B cell (primary cell): ENCODE measurements at regions of chr15 and their contacts with region 1.

Region 1: GRCh38 chr15:80776420-80777045 is 2.6 kb upstream of the CEMIP start:
- DNase-seq: peak; percentile 66
- ATAC-seq: peak; percentile 57
- H3K4me3 ChIP-seq: no peak overlapping the region
- H3K4me3 Mint-ChIP-seq: no peak overlapping the region
- H3K27ac ChIP-seq: no peak overlapping the region
- H3K27ac Mint-ChIP-seq: no peak overlapping the region
- H3K4me1 ChIP-seq: peaks cover 14% of the 10 kb centered on the region in 2 donors
- H3K4me1 Mint-ChIP-seq: peaks cover 12% of the 10 kb centered on the region
- H3K27me3 ChIP-seq: peaks cover 0 to 40% (median 16%) of the 10 kb centered on the region in 4 experiments
- H3K27me3 Mint-ChIP-seq: peaks cover 15% of the 10 kb centered on the region
- CTCF ChIP-seq: peak; percentile 79

Region 2: GRCh38 chr15:80455668-80456442 is 320.7 kb before region 1 on chr15:
- CTCF ChIA-PET with region 1: interaction called, 69 read pairs
- POLR2A ChIA-PET with region 1: no interaction called
- intact Hi-C with region 1: no loop called
- DNase-seq: peak; percentile 69
- ATAC-seq: peak; percentile 49
- H3K4me3 ChIP-seq: no peak overlapping the region
- H3K4me3 Mint-ChIP-seq: no peak overlapping the region
- H3K27ac ChIP-seq: no peak overlapping the region
- H3K27ac Mint-ChIP-seq: no peak overlapping the region
- H3K4me1 ChIP-seq: peaks cover 0 to 4% of the 10 kb centered on the region in 2 donors
- H3K4me1 Mint-ChIP-seq: peaks cover 4% of the 10 kb centered on the region
- H3K27me3 ChIP-seq: peaks cover 0 to 8% (median 4%) of the 10 kb centered on the region in 4 experiments
- H3K27me3 Mint-ChIP-seq: peaks cover 11% of the 10 kb centered on the region
- CTCF ChIP-seq: peak; percentile 98

Region 3: GRCh38 chr15:80475572-80475971 is 301.0 kb before region 1 on chr15:
- CTCF ChIA-PET with region 1: no interaction called
- POLR2A ChIA-PET with region 1: no interaction called
- intact Hi-C with region 1: no loop called
- DNase-seq: no peak
- ATAC-seq: no peak
- H3K4me3 ChIP-seq: no peak overlapping the region
- H3K4me3 Mint-ChIP-seq: no peak overlapping the region
- H3K27ac ChIP-seq: no peak overlapping the region
- H3K27ac Mint-ChIP-seq: no peak overlapping the region
- H3K4me1 ChIP-seq: no peaks in the 10 kb centered on the region
- H3K4me1 Mint-ChIP-seq: no peaks in the 10 kb centered on the region
- H3K27me3 ChIP-seq: no peaks in the 10 kb centered on the region
- H3K27me3 Mint-ChIP-seq: peaks cover 20% of the 10 kb centered on the region
- CTCF ChIP-seq: no peak

Region 4: GRCh38 chr15:80567721-80568157 is 208.8 kb before region 1 on chr15:
- CTCF ChIA-PET with region 1: interaction called, 22 read pairs
- POLR2A ChIA-PET with region 1: no interaction called
- intact Hi-C with region 1: loop called (anchors 1 kb)
- DNase-seq: peak; percentile 18
- ATAC-seq: no peak
- H3K4me3 ChIP-seq: no peak overlapping the region
- H3K4me3 Mint-ChIP-seq: no peak overlapping the region
- H3K27ac ChIP-seq: no peak overlapping the region
- H3K27ac Mint-ChIP-seq: no peak overlapping the region
- H3K4me1 ChIP-seq: no peaks in the 10 kb centered on the region
- H3K4me1 Mint-ChIP-seq: no peaks in the 10 kb centered on the region
- H3K27me3 ChIP-seq: peaks cover 0 to 3% (median 0%) of the 10 kb centered on the region in 4 experiments
- H3K27me3 Mint-ChIP-seq: peaks cover 43% of the 10 kb centered on the region
- CTCF ChIP-seq: peak; percentile 15

Region 5: GRCh38 chr15:80766275-80766674 is 10.3 kb before region 1 on chr15:
- CTCF ChIA-PET with region 1: interaction called, 11 read pairs
- POLR2A ChIA-PET with region 1: no interaction called
- intact Hi-C with region 1: no loop called
- DNase-seq: no peak
- ATAC-seq: no peak
- H3K4me3 ChIP-seq: no peak overlapping the region
- H3K4me3 Mint-ChIP-seq: no peak overlapping the region
- H3K27ac ChIP-seq: no peak overlapping the region
- H3K27ac Mint-ChIP-seq: no peak overlapping the region
- H3K4me1 ChIP-seq: no peaks in the 10 kb centered on the region
- H3K4me1 Mint-ChIP-seq: no peaks in the 10 kb centered on the region
- H3K27me3 ChIP-seq: no peaks in the 10 kb centered on the region
- H3K27me3 Mint-ChIP-seq: peaks cover 4% of the 10 kb centered on the region
- CTCF ChIP-seq: no peak

Region 6: GRCh38 chr15:80789296-80789695 is 12.8 kb after region 1 on chr15:
- CTCF ChIA-PET with region 1: interaction called, 15 read pairs
- POLR2A ChIA-PET with region 1: no interaction called
- intact Hi-C with region 1: no loop called
- DNase-seq: no peak
- ATAC-seq: no peak
- H3K4me3 ChIP-seq: no peak overlapping the region
- H3K4me3 Mint-ChIP-seq: no peak overlapping the region
- H3K27ac ChIP-seq: no peak overlapping the region
- H3K27ac Mint-ChIP-seq: no peak overlapping the region
- H3K4me1 ChIP-seq: no peaks in the 10 kb centered on the region
- H3K4me1 Mint-ChIP-seq: no peaks in the 10 kb centered on the region
- H3K27me3 ChIP-seq: peaks cover 0 to 2% (median 0%) of the 10 kb centered on the region in 4 experiments
- H3K27me3 Mint-ChIP-seq: peaks cover 30% of the 10 kb centered on the region
- CTCF ChIP-seq: no peak

Region 7: GRCh38 chr15:80801891-80802680 is 25.6 kb after region 1 on chr15:
- CTCF ChIA-PET with region 1: no interaction called
- POLR2A ChIA-PET with region 1: no interaction called
- intact Hi-C with region 1: no loop called
- DNase-seq: no peak
- ATAC-seq: no peak
- H3K4me3 ChIP-seq: no peak overlapping the region
- H3K4me3 Mint-ChIP-seq: no peak overlapping the region
- H3K27ac ChIP-seq: no peak overlapping the region
- H3K27ac Mint-ChIP-seq: no peak overlapping the region
- H3K4me1 ChIP-seq: no peaks in the 10 kb centered on the region
- H3K4me1 Mint-ChIP-seq: no peaks in the 10 kb centered on the region
- H3K27me3 ChIP-seq: no peaks in the 10 kb centered on the region
- H3K27me3 Mint-ChIP-seq: peaks cover 2% of the 10 kb centered on the region
- CTCF ChIP-seq: no peak

Region 8: DNA sequence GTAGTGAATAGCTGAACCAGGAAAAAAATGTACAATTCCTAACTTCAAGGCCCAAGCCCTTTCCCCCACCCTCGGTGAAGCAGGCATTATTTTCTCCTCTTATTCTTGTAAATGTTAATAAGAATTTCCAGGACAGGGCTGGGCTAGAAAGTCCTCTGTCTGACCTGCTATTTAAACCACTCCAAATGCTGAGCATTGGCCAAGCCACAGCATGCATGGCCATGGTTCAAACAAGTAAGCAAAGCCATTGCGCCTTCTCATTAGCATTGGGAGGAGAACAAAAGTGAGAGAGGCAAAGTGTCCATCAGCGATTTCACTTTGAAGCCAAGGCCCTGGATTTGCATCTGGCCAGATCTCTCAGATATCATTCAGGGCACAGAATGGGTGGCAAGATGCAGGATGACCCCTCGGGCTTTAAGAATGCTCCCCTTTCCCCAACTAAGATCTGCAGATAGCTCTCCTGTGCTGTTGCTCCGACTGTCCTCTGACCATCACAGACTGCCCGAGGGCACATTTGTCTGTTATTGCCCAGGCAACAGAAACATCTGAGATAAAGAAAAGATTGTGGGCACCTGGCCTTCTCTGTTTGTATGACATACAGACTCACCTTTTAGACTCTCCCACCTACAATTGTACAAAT is 49.0 kb after region 1 on chr15:
- CTCF ChIA-PET with region 1: interaction called, 4 read pairs
- POLR2A ChIA-PET with region 1: no interaction called
- intact Hi-C with region 1: loop called (anchors 2 kb)
- DNase-seq: no peak
- ATAC-seq: no peak
- H3K4me3 ChIP-seq: no peak overlapping the region
- H3K4me3 Mint-ChIP-seq: no peak overlapping the region
- H3K27ac ChIP-seq: no peak overlapping the region
- H3K27ac Mint-ChIP-seq: no peak overlapping the region
- H3K4me1 ChIP-seq: peaks cover 19 to 26% of the 10 kb centered on the region in 2 donors
- H3K4me1 Mint-ChIP-seq: peaks cover 30% of the 10 kb centered on the region
- H3K27me3 ChIP-seq: no peaks in the 10 kb centered on the region
- H3K27me3 Mint-ChIP-seq: peaks cover 10% of the 10 kb centered on the region
- CTCF ChIP-seq: no peak

Region 9: DNA sequence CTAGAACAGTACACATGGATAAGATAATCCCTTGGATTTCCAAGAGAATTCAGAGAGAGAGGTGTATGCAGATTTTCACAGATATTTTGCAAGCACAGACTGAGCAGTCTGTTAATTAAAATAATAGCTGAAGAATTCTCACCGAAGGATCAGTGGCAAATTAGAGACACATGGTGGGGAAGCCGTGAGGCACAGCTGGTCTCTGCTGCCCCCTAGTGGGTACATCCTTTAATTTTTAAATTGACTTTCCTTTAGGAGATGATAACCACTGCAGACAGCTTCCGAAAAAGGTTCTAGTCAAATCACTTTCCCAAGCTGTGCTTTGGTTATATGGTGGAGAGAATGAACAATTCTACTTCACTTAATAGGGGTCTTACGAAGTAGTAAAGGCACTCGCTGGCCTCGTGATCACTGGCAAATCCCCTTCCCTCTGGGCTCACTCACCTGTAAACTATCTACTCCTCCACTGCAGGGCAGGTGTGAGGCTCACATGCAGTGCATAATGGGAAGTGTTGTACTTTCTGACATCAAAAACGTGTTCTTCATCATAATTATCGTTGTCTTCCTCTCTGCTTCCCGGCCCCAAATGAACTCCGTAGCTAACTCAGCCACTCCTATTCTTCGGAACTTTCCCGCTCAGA is 193.6 kb after region 1 on chr15:
- CTCF ChIA-PET with region 1: interaction called, 18 read pairs
- POLR2A ChIA-PET with region 1: no interaction called
- intact Hi-C with region 1: loop called (anchors 5 kb)
- DNase-seq: peak; percentile 75
- ATAC-seq: no peak
- H3K4me3 ChIP-seq: no peak overlapping the region
- H3K4me3 Mint-ChIP-seq: no peak overlapping the region
- H3K27ac ChIP-seq: no peak overlapping the region
- H3K27ac Mint-ChIP-seq: peak overlapping the region; percentile 26
- H3K4me1 ChIP-seq: no peaks in the 10 kb centered on the region
- H3K4me1 Mint-ChIP-seq: peaks cover 7% of the 10 kb centered on the region
- H3K27me3 ChIP-seq: no peaks in the 10 kb centered on the region
- H3K27me3 Mint-ChIP-seq: no peaks in the 10 kb centered on the region
- CTCF ChIP-seq: peak; percentile 95